Lower leg skin (tissue), 4 donors: ENCODE measurements at regions of chrX and their contacts with region 1.

Region 1: DNA sequence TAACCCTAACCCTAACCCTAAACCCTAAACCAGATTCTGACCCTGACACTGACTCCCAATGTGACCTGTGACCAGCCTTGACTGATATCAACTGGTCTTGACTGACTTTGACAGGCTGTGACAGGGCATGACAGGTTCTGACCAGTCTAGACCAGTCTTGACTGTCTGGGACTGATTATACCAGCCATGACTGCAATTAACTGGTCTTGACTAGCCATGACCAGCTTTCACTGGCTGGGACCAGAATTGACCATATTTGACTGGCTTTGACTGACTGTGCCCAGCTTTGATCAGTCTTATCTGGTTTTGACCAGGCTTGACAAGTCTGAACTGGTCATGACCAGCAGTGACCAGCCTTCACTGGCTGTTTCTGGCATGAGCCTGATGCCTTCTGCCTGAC is 95.5 kb downstream of the BMP15 start:
- DNase-seq: no peak
- H3K4me3 ChIP-seq: no peak overlapping the region
- CTCF ChIP-seq: no peak
- POLR2A ChIP-seq: no peak

Region 2: DNA sequence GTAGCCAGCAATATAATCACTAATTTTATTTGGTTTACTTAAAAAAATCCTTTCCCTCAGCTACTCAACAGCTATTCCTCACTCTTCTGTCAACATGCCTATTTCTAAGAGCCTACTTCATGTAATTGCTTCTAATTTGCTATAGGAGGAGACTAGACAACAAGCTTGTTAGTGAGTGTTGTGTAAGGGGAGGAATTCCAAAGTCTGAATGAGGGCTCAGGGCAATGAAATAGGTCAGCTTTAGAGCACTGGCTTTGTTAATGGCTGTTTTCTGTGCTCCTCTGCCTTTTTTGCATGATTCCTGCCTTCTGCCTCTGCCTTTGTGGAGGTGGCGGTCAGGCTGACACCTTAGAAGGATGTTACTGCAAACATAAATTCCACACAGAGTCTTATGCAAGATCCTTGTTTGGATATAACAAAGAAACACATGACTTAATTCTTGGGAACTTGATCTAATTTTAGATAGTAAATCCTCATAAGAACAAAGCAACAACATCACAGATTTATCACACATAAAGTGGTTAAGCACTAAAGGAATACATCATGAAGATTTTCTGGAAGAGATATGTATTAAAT is 1295.2 kb before region 1 on chrX:
- intact Hi-C with region 1: loop called (anchors 10 kb)
- DNase-seq: no peak
- H3K4me3 ChIP-seq: no peak overlapping the region
- CTCF ChIP-seq: no peak
- POLR2A ChIP-seq: no peak